IMR-90 (cell line): ENCODE measurements at regions of chr7 and their contacts with region 1.

Region 1: DNA sequence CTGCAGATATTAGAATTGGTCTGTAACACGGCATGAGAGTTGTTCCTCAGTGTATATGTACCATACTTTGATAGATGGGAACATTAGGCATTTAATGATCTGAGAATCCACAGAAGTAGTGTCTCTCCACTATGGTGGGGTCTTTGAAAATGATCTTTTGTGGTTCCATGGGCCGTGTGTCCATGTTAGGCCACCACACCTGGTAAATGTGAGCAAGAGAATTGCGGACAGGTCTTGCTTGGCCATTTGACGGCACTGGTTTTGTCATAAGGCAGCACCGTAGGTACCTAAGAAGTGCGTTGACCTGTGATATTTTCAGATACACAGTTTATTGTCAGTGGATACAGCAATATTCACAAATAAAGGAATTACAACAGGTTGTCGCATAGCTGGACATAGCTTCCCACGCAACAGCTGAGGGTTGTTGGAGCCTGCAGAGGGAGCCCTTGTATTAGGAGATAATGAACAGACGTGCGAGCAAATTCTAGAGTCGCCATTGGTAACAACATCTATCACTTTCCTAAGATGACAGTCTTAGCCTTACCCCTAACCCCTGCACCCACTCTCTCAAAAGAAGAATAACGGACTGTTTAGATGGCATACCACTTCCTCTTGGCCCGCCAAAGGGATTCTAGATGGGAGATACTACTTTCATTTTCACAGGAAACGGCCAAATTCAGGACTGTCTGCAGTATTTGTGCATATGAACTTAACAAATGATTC is 111.4 kb downstream of the COL28A1 start:
- DNase-seq: peak; percentile 67
- ATAC-seq: peak; percentile 89
- H3K4me3 ChIP-seq: peak overlapping the region; percentile 72
- H3K27ac ChIP-seq: 0 out of 2 replicates have a peak overlapping the region, but pooled peaks have one; percentile 16
- H3K4me1 ChIP-seq: 0 out of 2 replicates have a peak, but pooled peaks cover under 1% of the 10 kb centered on the region
- H3K27me3 ChIP-seq: no peaks in the 10 kb centered on the region; the same call in 1 of the 2 replicates
- CTCF ChIP-seq: peak; percentile 94
- POLR2A ChIP-seq: peak; percentile 45; the same call in 1 of the 2 replicates
- RAD21 ChIP-seq: peak; percentile 98

Region 2: GRCh38 chr7:6833636-6834035 is 590.7 kb before region 1 on chr7:
- CTCF ChIA-PET with region 1: no interaction called
- POLR2A ChIA-PET with region 1: no interaction called
- dilution Hi-C with region 1: no loop called
- in situ Hi-C with region 1: no loop called
- intact Hi-C with region 1: no loop called
- DNase-seq: no peak
- ATAC-seq: no peak
- H3K4me3 ChIP-seq: no peak overlapping the region
- H3K27ac ChIP-seq: no peak overlapping the region
- H3K4me1 ChIP-seq: no peaks in the 10 kb centered on the region
- H3K27me3 ChIP-seq: no peaks in the 10 kb centered on the region; the same call in 1 of the 2 replicates
- CTCF ChIP-seq: no peak
- POLR2A ChIP-seq: no peak
- RAD21 ChIP-seq: no peak

Region 3: GRCh38 chr7:7103343-7104313 is 320.7 kb before region 1 on chr7:
- CTCF ChIA-PET with region 1: interaction called, 7 read pairs
- POLR2A ChIA-PET with region 1: no interaction called
- dilution Hi-C with region 1: no loop called
- in situ Hi-C with region 1: loop called (anchors 10 kb)
- intact Hi-C with region 1: loop called (anchors 1 kb)
- DNase-seq: peak; percentile 74
- ATAC-seq: peak; percentile 53; the same call in 1 of the 2 replicates
- H3K4me3 ChIP-seq: no peak overlapping the region
- H3K27ac ChIP-seq: no peak overlapping the region
- H3K4me1 ChIP-seq: peaks cover 2% of the 10 kb centered on the region; the same call in 1 of the 2 replicates
- H3K27me3 ChIP-seq: no peaks in the 10 kb centered on the region
- CTCF ChIP-seq: peak; percentile 74
- POLR2A ChIP-seq: no peak
- RAD21 ChIP-seq: peak; percentile 74

Region 4: DNA sequence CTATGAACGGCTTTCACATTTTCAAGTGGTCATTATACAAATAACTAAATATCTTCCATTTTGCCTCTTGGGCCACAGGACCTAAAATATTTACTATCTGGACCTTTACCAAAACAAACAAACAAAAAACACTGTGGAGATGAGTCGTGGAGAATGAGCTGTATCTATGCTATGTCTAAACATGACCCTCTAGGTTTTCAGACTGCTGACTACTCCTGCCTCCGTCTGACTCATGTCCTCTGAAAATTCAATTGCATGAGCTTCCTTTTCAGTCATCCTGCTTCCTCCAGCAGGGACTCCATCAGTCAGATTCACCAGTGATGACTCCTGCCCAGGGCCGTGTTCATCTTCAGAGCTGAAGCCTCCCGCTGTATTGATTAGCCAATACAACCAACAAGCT is 14.5 kb after region 1 on chr7:
- CTCF ChIA-PET with region 1: interaction called, 13 read pairs
- POLR2A ChIA-PET with region 1: interaction called, 7 read pairs
- dilution Hi-C with region 1: no loop called
- in situ Hi-C with region 1: no loop called
- intact Hi-C with region 1: no loop called
- DNase-seq: peak; percentile 99
- ATAC-seq: peak; percentile 97
- H3K4me3 ChIP-seq: no peak overlapping the region
- H3K27ac ChIP-seq: peak overlapping the region; percentile 78
- H3K4me1 ChIP-seq: peaks cover 8% of the 10 kb centered on the region
- H3K27me3 ChIP-seq: no peaks in the 10 kb centered on the region
- CTCF ChIP-seq: no peak
- POLR2A ChIP-seq: no peak
- RAD21 ChIP-seq: no peak

Region 5: DNA sequence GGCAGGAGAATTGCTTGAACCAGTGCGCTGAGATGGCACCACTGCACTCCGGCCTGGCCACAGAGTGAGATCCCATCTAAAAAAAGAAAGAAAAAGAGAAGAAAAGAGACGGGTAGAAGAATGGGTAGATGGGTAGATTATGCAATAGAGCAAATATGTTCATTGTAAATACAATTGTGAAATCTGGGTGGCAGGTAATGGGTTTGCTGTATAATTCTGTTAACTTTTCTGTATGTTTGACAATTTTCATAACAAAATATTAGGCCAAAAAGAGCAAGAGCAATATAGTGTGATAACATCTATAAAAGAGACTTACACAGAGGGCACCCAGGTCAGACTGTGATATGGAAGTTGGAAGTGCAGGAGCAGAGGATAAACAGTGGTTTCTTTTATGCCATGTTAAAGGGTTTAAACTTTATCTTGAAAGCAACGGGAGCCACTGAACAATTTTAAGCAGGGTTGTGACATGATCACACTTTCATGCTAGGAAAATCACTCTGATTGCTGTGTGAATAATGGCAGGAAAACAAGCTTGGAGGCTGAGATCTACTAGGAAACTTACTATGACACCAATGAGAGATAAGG is 118.0 kb after region 1 on chr7:
- CTCF ChIA-PET with region 1: interaction called, 6 read pairs
- POLR2A ChIA-PET with region 1: no interaction called
- dilution Hi-C with region 1: no loop called
- in situ Hi-C with region 1: loop called (anchors 5 kb)
- intact Hi-C with region 1: loop called (anchors 1 kb)
- DNase-seq: no peak
- ATAC-seq: no peak
- H3K4me3 ChIP-seq: no peak overlapping the region
- H3K27ac ChIP-seq: no peak overlapping the region
- H3K4me1 ChIP-seq: no peaks in the 10 kb centered on the region
- H3K27me3 ChIP-seq: no peaks in the 10 kb centered on the region
- CTCF ChIP-seq: no peak
- POLR2A ChIP-seq: no peak
- RAD21 ChIP-seq: no peak

Region 6: DNA sequence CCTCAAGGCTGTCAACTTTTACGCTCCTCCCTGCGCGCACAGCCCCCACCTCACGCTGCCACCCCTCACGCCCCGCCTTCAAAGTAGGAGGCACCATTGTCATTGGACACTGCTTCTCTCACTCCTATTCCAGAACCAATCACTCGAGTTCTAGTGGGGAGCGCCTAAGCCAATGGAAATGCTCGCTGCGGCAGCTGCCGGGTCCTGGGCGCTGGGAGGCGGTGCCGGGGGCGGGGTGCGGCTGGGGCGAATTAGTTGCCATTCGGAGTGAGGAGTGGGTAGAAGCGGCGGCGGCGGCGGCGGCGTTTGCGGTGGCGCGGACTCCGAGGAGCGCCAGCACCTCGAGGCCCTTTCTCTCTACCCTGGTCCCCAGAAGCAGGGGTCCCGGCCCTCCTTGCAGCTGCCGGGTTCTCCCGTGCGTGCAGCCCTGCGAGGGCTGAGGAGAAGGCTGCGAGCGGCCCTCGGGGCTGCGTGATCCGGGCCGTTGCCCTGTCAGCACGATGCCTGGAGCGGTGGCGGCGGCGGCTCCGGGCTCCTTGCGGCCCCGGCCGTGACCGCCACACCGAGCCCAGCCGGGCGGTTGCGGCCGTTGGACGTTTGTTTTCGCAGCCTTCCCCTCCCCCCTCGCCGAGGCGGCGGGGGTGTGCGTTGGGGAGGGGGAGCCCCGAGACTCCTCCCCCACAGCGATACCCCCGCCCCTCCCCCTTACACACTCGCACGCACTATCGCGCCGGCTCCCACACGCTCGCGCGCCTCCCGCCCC is 544.4 kb after region 1 on chr7 and contains the start of gene GLCCI1:
- CTCF ChIA-PET with region 1: no interaction called
- POLR2A ChIA-PET with region 1: no interaction called
- dilution Hi-C with region 1: no loop called
- in situ Hi-C with region 1: loop called (anchors 25 kb)
- intact Hi-C with region 1: loop called (anchors 10 kb)
- DNase-seq: peak; percentile 95
- ATAC-seq: peak; percentile 97
- H3K4me3 ChIP-seq: peak within 1 kb of the TSS; percentile 80
- H3K27ac ChIP-seq: peak within 1 kb of the TSS; percentile 80
- H3K4me1 ChIP-seq: peaks cover 4% of the 10 kb centered on the region; the same call in 1 of the 2 replicates
- H3K27me3 ChIP-seq: no peaks in the 10 kb centered on the region
- CTCF ChIP-seq: no peak
- POLR2A ChIP-seq: peak; percentile 67
- RAD21 ChIP-seq: peak; percentile 7; the same call in 1 of the 2 replicates
- total RNA-seq, gene GLCCI1: 4.1 and 7.8 TPM in 2 replicates